ENCODE measurements at regions of chr14 and their contacts with region 1.

Region 1: DNA sequence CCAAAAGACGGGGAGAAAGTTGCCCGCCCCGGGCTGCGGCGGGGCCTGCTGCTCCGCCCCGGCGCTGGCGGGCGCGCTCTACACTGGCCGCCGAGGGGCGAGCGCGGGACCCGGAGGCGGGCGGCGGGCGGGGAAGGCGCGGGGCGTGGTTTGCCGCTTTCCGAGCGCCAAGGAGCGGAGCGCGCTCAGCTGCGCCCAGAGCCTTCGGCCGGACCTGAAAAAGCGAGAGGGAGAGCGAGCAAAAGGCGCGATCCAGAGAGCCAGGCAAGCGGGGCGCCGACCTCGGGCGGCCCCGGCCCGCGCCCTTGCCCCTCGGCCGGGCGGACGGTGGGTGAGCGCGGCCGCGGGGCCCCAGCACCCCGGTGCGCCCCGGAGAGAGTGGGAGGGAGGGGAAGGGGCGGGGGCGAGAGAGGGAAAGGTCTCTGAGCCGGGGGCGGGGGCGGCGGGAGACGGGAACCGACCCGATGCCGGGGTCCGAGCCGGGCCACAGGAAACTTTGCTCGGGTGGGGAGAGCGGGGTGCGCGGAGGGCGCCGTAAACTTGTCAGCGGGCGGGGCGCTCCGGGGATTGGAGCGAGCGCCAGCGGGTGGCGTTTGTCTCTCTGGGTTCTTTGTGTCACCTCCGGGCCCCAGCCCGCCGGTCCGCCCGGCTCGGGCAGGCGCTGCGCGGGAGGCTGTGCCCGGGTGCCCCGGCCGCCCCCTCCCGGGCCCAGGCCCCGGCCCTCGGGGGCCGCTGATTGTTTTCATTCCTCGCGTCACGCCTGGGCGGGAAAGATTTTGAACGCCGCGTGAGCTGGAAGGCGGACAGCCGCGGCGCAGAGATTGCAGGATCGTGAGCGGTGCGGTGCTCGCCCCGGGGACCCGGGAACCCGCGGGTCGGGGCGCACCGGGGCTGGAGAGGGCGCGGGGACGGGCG is at the start of gene SYNE2:
- DNase-seq: peak; percentile 84
- total RNA-seq, gene SYNE2: 61.4 TPM

Region 2: DNA sequence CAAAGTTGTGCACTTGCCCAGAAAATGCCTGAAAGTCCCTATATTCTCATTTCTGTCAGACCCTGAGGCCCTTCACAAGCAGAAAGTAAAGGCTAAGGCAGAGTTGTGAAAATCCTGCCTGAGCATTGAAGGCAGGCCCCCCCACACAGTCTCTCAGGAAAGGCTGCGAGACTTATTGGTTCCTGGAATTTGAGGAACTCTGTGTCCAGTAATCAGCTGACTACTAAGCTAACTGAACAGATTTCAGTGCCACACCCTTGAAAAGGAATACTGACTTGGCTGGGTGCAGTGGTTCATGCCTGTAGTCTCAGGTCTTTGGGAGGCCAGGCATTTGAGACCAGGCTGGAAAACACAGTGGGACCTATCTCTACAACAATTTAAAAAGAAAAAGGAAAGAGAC is 288.8 kb before region 1 on chr14:
- intact Hi-C with region 1: no loop called
- DNase-seq: no peak

Region 3: GRCh38 chr14:63875311-63875710 is 22.2 kb after region 1 on chr14:
- intact Hi-C with region 1: loop called (anchors 1 kb)
- DNase-seq: no peak

Region 4: GRCh38 chr14:63893701-63894458 is 40.8 kb after region 1 on chr14:
- intact Hi-C with region 1: loop called (anchors 5 kb)
- DNase-seq: no peak

Region 5: DNA sequence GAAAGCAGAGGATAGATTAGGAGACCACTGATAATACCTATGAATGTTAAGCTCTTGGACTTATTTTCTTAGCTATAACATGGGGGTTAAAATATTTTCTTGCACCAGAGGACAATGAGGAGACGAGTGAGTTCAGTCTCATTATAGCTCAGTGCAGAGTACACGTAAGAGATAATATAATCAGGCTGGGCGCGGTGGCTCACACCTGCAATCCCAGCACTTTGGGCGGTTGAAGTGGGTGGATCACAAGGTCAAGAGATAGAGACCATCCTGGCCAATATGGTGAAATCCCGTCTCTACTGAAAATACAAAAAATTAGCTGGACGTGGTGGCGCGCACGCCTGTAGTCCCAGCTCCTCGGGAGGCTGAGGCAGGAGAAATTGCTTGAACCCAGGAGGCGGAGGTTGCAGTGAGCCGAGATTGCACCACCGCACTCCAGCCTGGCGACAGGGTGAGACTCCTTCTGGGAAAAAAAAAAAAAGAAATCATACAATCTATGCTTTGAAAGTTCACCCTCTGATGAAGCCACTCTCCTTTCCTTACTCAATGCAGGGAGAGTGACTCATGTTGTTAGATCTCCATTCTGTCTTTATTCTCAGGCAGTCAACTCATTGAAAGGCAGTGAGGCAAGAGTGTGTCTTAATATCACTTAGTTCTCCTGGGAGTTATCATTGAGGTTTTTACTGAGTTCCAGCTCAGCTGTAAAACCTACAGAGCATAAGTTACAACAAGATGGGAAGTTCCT is 133.9 kb after region 1 on chr14:
- intact Hi-C with region 1: loop called (anchors 10 kb)
- DNase-seq: no peak

Measured in cardiac septum (tissue), 1 donor.